PC-3 (cell line): ENCODE measurements at regions of chr1 and their contacts with region 1.

Region 1: GRCh38 chr1:41698916-41699860 is 214.7 kb upstream of the EDN2 start:
- DNase-seq: no peak
- ATAC-seq: no peak
- H3K4me3 ChIP-seq: no peak overlapping the region
- H3K27ac ChIP-seq: no peak overlapping the region
- H3K4me1 ChIP-seq: no peaks in the 10 kb centered on the region
- H3K27me3 ChIP-seq: no peaks in the 10 kb centered on the region
- CTCF ChIP-seq: no peak

Region 2: GRCh38 chr1:41670217-41670957 is 28.8 kb before region 1 on chr1:
- CTCF ChIA-PET with region 1: no interaction called
- POLR2A ChIA-PET with region 1: interaction called, 11 read pairs
- intact Hi-C with region 1: no loop called
- DNase-seq: peak; percentile 88
- ATAC-seq: peak; percentile 89
- H3K4me3 ChIP-seq: no peak overlapping the region
- H3K27ac ChIP-seq: peak overlapping the region; percentile 66
- H3K4me1 ChIP-seq: peaks cover 71% of the 10 kb centered on the region
- H3K27me3 ChIP-seq: no peaks in the 10 kb centered on the region
- CTCF ChIP-seq: no peak